ENCODE measurements at regions of chr13 and their contacts with region 1.

Region 1: DNA sequence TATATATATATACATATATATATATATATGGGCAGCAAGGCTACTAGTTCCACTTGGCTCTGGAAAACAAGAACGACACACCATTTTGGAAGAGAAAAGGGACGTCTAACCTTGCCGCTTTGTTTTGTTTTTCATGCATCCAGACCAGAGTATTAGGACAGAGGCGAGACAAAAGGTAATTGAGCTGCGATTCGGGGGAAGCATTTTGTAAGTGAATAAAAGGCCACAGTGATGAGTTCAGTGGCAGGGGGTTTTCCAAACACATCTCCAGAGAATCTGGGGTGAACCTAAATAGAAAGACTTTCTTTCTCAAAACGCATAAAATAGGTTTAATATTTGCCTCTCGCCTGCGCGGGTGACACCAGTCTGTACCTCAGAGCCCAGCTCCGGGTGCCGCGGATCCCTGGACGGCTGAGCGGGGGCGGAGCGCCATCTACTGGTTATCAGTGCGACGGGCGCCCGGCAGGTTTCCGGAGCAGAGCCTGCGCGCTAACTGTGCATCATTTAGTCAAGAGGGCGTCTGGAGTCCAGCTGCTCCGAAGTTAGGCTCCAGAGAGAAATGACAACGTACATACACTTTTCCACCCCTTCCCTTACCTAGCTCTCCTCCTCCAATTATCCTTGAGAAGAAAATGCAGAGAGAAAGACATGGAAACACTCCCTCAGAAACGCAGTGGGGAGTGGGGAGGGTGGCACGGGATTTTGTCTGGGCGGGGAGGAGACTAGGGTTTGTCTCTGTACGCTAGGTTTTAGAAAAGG is 262.3 kb downstream of the TBC1D4 start:
- DNase-seq: peak; percentile 7
- ATAC-seq: peak; percentile 99
- H3K4me3 ChIP-seq: no peak overlapping the region
- H3K27ac ChIP-seq: no peak overlapping the region
- H3K4me1 ChIP-seq: no peaks in the 10 kb centered on the region
- H3K27me3 ChIP-seq: no peaks in the 10 kb centered on the region; a peak in 1 of 4 replicates
- CTCF ChIP-seq: peak; percentile 93 to 98 (median 96); a peak in 5 of 6 replicates
- EP300 ChIP-seq: no peak
- POLR2A ChIP-seq: no peak
- RAD21 ChIP-seq: peak; percentile 99

Region 2: GRCh38 chr13:73740666-73741065 is 1479.0 kb before region 1 on chr13:
- CTCF ChIA-PET with region 1: no interaction called
- POLR2A ChIA-PET with region 1: no interaction called
- RAD21 ChIA-PET with region 1: no interaction called
- SMC1A ChIA-PET with region 1: no interaction called
- in situ Hi-C with region 1: loop called (anchors 10 kb)
- intact Hi-C with region 1: no loop called
- DNase-seq: no peak
- ATAC-seq: no peak
- H3K4me3 ChIP-seq: no peak overlapping the region
- H3K27ac ChIP-seq: no peak overlapping the region
- H3K4me1 ChIP-seq: no peaks in the 10 kb centered on the region
- H3K27me3 ChIP-seq: no peaks in the 10 kb centered on the region
- CTCF ChIP-seq: no peak
- EP300 ChIP-seq: no peak
- POLR2A ChIP-seq: no peak
- RAD21 ChIP-seq: no peak

Region 3: GRCh38 chr13:73754727-73755292 is 1464.8 kb before region 1 on chr13:
- CTCF ChIA-PET with region 1: interaction called, 4 read pairs
- POLR2A ChIA-PET with region 1: no interaction called
- RAD21 ChIA-PET with region 1: no interaction called
- SMC1A ChIA-PET with region 1: interaction called, 8 read pairs
- in situ Hi-C with region 1: no loop called
- intact Hi-C with region 1: loop called (anchors 2 kb)
- DNase-seq: no peak
- ATAC-seq: peak; percentile 86
- H3K4me3 ChIP-seq: no peak overlapping the region
- H3K27ac ChIP-seq: no peak overlapping the region
- H3K4me1 ChIP-seq: no peaks in the 10 kb centered on the region
- H3K27me3 ChIP-seq: no peaks in the 10 kb centered on the region
- CTCF ChIP-seq: peak; percentile 52 to 79 (median 68); a peak in 5 of 6 replicates
- EP300 ChIP-seq: no peak
- POLR2A ChIP-seq: no peak
- RAD21 ChIP-seq: peak; percentile 73

Region 4: GRCh38 chr13:74287724-74288169 is 931.9 kb before region 1 on chr13:
- CTCF ChIA-PET with region 1: interaction called, 8 read pairs
- POLR2A ChIA-PET with region 1: no interaction called
- RAD21 ChIA-PET with region 1: interaction called, 7 read pairs
- SMC1A ChIA-PET with region 1: interaction called, 4 read pairs
- in situ Hi-C with region 1: no loop called
- intact Hi-C with region 1: loop called (anchors 10 kb)
- DNase-seq: no peak
- ATAC-seq: peak; percentile 55
- H3K4me3 ChIP-seq: no peak overlapping the region
- H3K27ac ChIP-seq: no peak overlapping the region
- H3K4me1 ChIP-seq: no peaks in the 10 kb centered on the region
- H3K27me3 ChIP-seq: peaks cover 2 to 5% of the 10 kb centered on the region in 2 experiments; a peak in 1 of 4 replicates
- CTCF ChIP-seq: no peak
- EP300 ChIP-seq: no peak
- POLR2A ChIP-seq: no peak
- RAD21 ChIP-seq: no peak

Region 5: GRCh38 chr13:74573654-74574053 is 646.0 kb before region 1 on chr13:
- CTCF ChIA-PET with region 1: interaction called, 13 read pairs
- POLR2A ChIA-PET with region 1: no interaction called
- RAD21 ChIA-PET with region 1: no interaction called
- SMC1A ChIA-PET with region 1: interaction called, 8 read pairs
- in situ Hi-C with region 1: no loop called
- intact Hi-C with region 1: no loop called
- DNase-seq: no peak
- ATAC-seq: peak; percentile 54; the same call in 1 of the 3 replicates
- H3K4me3 ChIP-seq: no peak overlapping the region
- H3K27ac ChIP-seq: no peak overlapping the region
- H3K4me1 ChIP-seq: no peaks in the 10 kb centered on the region
- H3K27me3 ChIP-seq: peaks cover 5 to 6% of the 10 kb centered on the region in 2 experiments; a peak in 2 of 4 replicates
- CTCF ChIP-seq: peak in 2 of 3 experiments; percentile 16 to 17; a peak in 1 of 6 replicates
- EP300 ChIP-seq: no peak
- POLR2A ChIP-seq: no peak
- RAD21 ChIP-seq: peak; percentile 37; the same call in 1 of the 2 replicates

Region 6: GRCh38 chr13:74683411-74683810 is 536.2 kb before region 1 on chr13:
- CTCF ChIA-PET with region 1: interaction called, 4 read pairs
- POLR2A ChIA-PET with region 1: no interaction called
- RAD21 ChIA-PET with region 1: no interaction called
- SMC1A ChIA-PET with region 1: no interaction called
- in situ Hi-C with region 1: no loop called
- intact Hi-C with region 1: loop called (anchors 10 kb)
- DNase-seq: no peak
- ATAC-seq: peak; percentile 36; the same call in 1 of the 3 replicates
- H3K4me3 ChIP-seq: no peak overlapping the region
- H3K27ac ChIP-seq: no peak overlapping the region
- H3K4me1 ChIP-seq: no peaks in the 10 kb centered on the region
- H3K27me3 ChIP-seq: no peaks in the 10 kb centered on the region
- CTCF ChIP-seq: no peak; a peak in 1 of 6 replicates
- EP300 ChIP-seq: no peak
- POLR2A ChIP-seq: no peak
- RAD21 ChIP-seq: peak; percentile 20; the same call in 1 of the 2 replicates